Mammary epithelial cell (primary cell): ENCODE measurements at regions of chr4 and their contacts with region 1.

Region 1: DNA sequence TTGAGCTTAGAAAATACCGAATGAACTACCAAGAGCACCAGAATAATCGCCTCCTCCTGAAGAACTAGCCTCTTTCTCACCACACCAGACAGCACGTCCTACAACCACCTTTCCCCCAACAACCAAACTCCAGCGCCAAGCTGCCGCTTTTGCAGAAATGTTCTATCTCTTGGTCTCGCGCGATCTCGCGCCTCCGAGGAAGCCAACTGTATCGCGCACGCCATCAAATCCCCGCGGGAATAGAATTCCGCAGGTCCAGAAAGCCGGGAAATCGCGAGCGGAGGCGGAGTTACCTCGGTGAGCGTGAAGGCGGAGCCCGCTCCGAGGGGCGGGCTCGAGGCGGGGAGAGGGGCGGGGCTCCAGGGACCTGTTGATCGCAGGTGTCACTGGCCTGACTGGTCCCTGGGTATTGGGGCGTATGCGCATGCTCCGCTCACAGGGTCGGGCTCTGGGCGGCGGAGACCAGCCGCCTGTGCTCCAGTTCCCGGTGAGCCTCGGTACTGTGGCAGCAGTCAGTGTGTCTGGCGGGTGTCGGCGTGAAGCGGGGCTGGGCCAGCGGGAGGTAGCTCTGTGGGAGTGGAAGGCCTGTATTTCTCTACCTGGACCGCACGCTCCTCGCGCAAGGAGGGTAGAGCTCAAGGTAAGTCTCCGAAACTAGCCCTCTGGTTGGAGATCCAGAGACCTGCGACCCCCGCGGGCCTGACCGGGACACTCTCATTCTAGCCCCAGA is at the start of gene USP53:
- DNase-seq: peak; percentile 99
- H3K4me3 ChIP-seq: peak within 1 kb of the TSS; percentile 79 to 99 (median 82)
- H3K27ac ChIP-seq: peak within 1 kb of the TSS; percentile 100
- H3K4me1 ChIP-seq: peaks cover 29% of the 10 kb centered on the region
- H3K27me3 ChIP-seq: no peaks in the 10 kb centered on the region
- CTCF ChIP-seq: peak in 1 of 2 donors; percentile 0
- total RNA-seq, gene USP53: 41.1 to 62.0 TPM

Region 2: GRCh38 chr4:118989098-118990080 is 223.0 kb before region 1 on chr4:
- CTCF ChIA-PET with region 1: no interaction called
- dilution Hi-C with region 1: no loop called
- in situ Hi-C with region 1: loop called in 1 of 2 experiments (anchors 10 kb)
- intact Hi-C with region 1: loop called (anchors 1 kb)
- DNase-seq: peak; percentile 99
- H3K4me3 ChIP-seq: no peak overlapping the region
- H3K27ac ChIP-seq: peak overlapping the region; percentile 95
- H3K4me1 ChIP-seq: peaks cover 21% of the 10 kb centered on the region
- H3K27me3 ChIP-seq: no peaks in the 10 kb centered on the region
- CTCF ChIP-seq: no peak

Region 3: GRCh38 chr4:119025916-119026661 is 186.3 kb before region 1 on chr4:
- CTCF ChIA-PET with region 1: no interaction called
- dilution Hi-C with region 1: no loop called
- in situ Hi-C with region 1: no loop called
- intact Hi-C with region 1: loop called (anchors 5 kb)
- DNase-seq: peak; percentile 84
- H3K4me3 ChIP-seq: peak overlapping the region in 2 of 3 experiments; percentile 26 to 41
- H3K27ac ChIP-seq: peak overlapping the region; percentile 99
- H3K4me1 ChIP-seq: peaks cover 21% of the 10 kb centered on the region
- H3K27me3 ChIP-seq: no peaks in the 10 kb centered on the region
- CTCF ChIP-seq: no peak

Region 4: DNA sequence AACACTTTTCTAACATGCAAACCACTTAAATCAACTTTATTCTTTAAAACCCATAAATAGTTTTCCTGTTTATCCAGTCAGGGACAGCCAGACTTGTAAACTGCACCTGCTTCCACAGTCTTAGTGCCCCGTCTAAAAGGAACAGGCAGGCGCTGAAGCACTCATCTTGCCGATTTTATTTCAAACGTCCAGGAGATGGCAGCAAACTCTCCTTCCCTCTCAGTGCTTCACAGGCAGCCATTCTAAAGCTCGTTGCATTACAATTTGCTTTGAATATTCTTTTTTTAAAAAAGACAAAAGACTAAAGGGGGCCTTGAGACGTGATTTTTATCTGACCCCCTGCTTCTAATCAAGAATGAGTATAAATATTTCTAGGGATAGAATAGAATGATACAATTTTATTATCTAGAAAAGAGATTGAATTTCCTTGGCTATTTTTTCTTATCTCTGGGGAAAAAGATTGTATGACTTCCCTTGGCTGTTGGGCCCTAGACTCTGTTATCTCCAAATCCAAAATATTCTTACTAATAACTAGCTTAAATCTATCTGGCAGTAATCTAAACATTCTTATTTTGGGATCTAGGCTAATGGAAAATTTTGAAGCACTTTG is 170.3 kb before region 1 on chr4:
- CTCF ChIA-PET with region 1: interaction called, 5 read pairs
- dilution Hi-C with region 1: no loop called
- in situ Hi-C with region 1: no loop called
- intact Hi-C with region 1: loop called (anchors 1 kb)
- DNase-seq: peak; percentile 68
- H3K4me3 ChIP-seq: no peak overlapping the region
- H3K27ac ChIP-seq: no peak overlapping the region
- H3K4me1 ChIP-seq: peaks cover 18% of the 10 kb centered on the region
- H3K27me3 ChIP-seq: no peaks in the 10 kb centered on the region
- CTCF ChIP-seq: peak; percentile 58 to 74

Region 5: DNA sequence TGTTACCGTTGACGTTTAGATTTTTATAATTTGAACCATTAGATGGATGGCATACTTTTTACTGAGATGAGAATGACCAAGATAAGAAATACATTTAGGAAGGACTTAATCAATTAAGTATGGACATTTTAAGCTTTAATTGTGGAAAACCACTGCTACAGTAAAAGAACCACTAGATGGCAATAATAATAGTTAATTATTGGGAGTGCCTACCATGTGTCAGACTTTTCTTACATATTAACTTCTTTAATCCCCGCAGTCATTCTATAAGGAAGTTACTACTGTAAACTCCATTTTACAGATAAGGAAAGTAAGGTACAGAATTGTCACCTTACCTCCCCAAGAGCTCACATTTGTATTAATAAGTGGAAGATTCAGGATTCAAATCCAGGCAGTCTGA is 125.3 kb before region 1 on chr4:
- CTCF ChIA-PET with region 1: interaction called, 4 read pairs
- dilution Hi-C with region 1: no loop called
- in situ Hi-C with region 1: no loop called
- intact Hi-C with region 1: loop called (anchors 2 kb)
- DNase-seq: no peak
- H3K4me3 ChIP-seq: no peak overlapping the region
- H3K27ac ChIP-seq: no peak overlapping the region
- H3K4me1 ChIP-seq: no peaks in the 10 kb centered on the region
- H3K27me3 ChIP-seq: no peaks in the 10 kb centered on the region
- CTCF ChIP-seq: peak; percentile 30 to 40

Region 6: GRCh38 chr4:119103263-119103662 is 109.1 kb before region 1 on chr4:
- CTCF ChIA-PET with region 1: interaction called, 4 read pairs
- dilution Hi-C with region 1: no loop called
- in situ Hi-C with region 1: loop called (anchors 5 to 10 kb)
- intact Hi-C with region 1: loop called (anchors 1 kb)
- DNase-seq: peak; percentile 96
- H3K4me3 ChIP-seq: no peak overlapping the region
- H3K27ac ChIP-seq: peak overlapping the region; percentile 91
- H3K4me1 ChIP-seq: peaks cover 34% of the 10 kb centered on the region
- H3K27me3 ChIP-seq: no peaks in the 10 kb centered on the region
- CTCF ChIP-seq: no peak

Region 7: GRCh38 chr4:119286377-119287002 is 74.1 kb after region 1 on chr4:
- CTCF ChIA-PET with region 1: no interaction called
- dilution Hi-C with region 1: no loop called
- in situ Hi-C with region 1: no loop called
- intact Hi-C with region 1: loop called (anchors 5 kb)
- DNase-seq: peak; percentile 34
- H3K4me3 ChIP-seq: no peak overlapping the region
- H3K27ac ChIP-seq: peak overlapping the region; percentile 15
- H3K4me1 ChIP-seq: no peaks in the 10 kb centered on the region
- H3K27me3 ChIP-seq: no peaks in the 10 kb centered on the region
- CTCF ChIP-seq: peak; percentile 48 to 58

Region 8: DNA sequence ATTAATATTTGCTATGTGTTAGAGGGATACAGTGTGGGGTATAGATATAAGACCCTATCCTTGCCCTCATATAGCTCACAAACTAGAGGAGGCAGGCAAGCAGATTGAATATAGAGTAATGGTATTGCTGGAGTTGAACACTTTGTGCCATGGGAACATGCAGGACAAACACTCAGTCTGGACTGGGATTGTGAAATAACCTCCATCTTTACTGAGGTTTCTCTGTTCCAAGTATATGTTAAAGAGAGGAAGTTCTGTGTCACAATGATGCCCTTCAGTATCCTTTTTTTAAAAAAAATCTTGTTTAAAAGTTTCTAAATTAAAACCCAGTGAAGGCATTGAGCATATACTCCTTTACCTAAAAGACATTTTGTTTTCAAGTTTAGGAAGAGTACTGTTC is 100.8 kb after region 1 on chr4:
- CTCF ChIA-PET with region 1: no interaction called
- dilution Hi-C with region 1: no loop called
- in situ Hi-C with region 1: no loop called
- intact Hi-C with region 1: no loop called
- DNase-seq: no peak
- H3K4me3 ChIP-seq: no peak overlapping the region
- H3K27ac ChIP-seq: no peak overlapping the region
- H3K4me1 ChIP-seq: no peaks in the 10 kb centered on the region
- H3K27me3 ChIP-seq: no peaks in the 10 kb centered on the region
- CTCF ChIP-seq: no peak